ENCODE measurements at regions of chr3 and their contacts with region 1.

Region 1: DNA sequence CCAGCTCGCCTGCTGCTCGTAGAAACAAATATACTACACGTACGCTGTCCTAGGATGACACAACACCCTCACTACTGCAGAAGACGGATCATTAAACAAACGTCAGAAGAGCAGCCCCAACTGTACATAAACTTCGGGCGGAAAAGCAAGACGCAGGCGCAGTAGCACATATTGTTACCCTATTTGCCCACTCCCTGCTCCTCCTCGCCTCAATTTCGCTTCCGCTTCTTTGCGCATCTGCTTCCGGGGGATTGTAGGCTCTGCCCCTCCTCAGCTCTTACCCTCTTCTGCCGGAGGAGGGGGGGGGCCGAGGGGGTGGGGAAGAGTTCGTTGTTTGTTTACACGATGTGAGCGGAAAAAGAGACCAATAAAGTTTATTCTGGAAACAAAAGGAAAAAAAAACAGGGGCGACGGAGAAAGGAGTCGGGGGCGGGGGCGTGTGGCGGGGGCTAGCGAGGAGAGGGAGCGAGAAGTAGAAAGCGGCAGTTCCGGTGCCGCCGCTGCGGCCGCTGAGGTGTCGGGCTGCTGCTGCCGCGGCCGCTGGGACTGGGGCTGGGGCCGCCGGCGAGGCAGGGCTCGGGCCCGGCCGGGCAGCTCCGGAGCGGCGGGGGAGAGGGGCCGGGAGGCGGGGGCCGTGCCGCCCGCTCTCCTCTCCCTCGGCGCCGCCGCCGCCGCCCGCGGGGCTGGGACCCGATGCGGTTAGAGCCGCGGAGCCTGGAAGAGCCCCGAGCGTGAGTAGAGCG is at the start of gene PIK3CA:
- DNase-seq: peak; percentile 95 to 98
- H3K4me3 ChIP-seq: peak within 1 kb of the TSS; percentile 85
- H3K27ac ChIP-seq: peak within 1 kb of the TSS; percentile 68
- H3K4me1 ChIP-seq: peaks cover 20% of the 10 kb centered on the region
- H3K27me3 ChIP-seq: no peaks in the 10 kb centered on the region
- CTCF ChIP-seq: no peak
- total RNA-seq, gene PIK3CA: 33.9 and 39.9 TPM in 2 replicates

Region 2: GRCh38 chr3:179015551-179016020 is 132.5 kb before region 1 on chr3:
- CTCF ChIA-PET with region 1: no interaction called
- POLR2A ChIA-PET with region 1: no interaction called
- intact Hi-C with region 1: loop called (anchors 1 kb)
- DNase-seq: peak; percentile 67 to 76
- H3K4me3 ChIP-seq: no peak overlapping the region
- H3K27ac ChIP-seq: no peak overlapping the region
- H3K4me1 ChIP-seq: no peaks in the 10 kb centered on the region
- H3K27me3 ChIP-seq: no peaks in the 10 kb centered on the region
- CTCF ChIP-seq: peak; percentile 97

Region 3: DNA sequence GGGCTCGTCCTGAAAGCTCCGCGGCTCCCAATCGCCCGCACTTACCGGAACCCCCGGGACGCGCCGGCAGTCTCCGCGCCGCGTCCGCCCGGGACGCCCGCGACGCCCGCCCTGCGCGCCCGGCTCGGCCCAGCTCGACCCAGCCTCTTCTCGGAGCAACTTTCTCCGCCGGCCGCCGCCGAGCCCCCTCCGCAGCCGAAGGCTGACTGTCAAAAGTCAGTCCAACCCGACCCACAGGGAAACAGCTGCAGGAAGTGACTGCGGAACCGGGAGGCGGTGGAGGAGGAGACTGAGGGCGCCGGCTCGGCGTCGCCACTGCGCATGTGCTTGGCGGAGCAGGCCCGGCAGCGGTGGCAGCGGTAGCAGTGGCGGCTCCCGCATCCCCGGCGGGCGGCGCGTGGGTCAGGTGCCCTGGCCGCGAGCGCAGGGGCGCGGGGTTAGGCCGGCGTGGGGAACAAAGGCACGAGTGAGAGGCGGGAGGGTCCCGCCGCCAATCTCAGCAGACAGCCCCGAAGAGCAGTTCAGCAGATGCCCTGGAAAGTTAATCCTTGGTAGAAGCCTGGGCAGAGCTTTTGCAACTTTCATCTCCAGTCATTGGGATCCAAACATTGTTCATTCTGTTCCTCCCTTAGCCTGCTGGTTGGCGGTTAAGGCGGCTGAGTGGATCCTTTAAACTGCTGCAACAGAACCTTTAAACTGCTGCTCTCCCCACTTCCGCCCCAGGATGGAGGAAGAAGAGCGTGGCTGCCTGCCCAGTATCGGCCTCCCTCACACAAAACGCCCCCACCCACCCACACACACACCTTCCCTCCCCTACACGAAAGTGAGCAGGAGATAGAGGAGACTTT is 76.3 kb before region 1 on chr3 and contains the start of gene ZMAT3:
- CTCF ChIA-PET with region 1: no interaction called
- POLR2A ChIA-PET with region 1: no interaction called
- intact Hi-C with region 1: loop called (anchors 2 kb)
- DNase-seq: peak; percentile 63 to 86
- H3K4me3 ChIP-seq: peak within 1 kb of the TSS; percentile 96
- H3K27ac ChIP-seq: no peak within 1 kb of the TSS
- H3K4me1 ChIP-seq: peaks cover 19% of the 10 kb centered on the region
- H3K27me3 ChIP-seq: no peaks in the 10 kb centered on the region
- CTCF ChIP-seq: no peak
- total RNA-seq, gene ZMAT3: 5.9 and 7.2 TPM in 2 replicates

Region 4: DNA sequence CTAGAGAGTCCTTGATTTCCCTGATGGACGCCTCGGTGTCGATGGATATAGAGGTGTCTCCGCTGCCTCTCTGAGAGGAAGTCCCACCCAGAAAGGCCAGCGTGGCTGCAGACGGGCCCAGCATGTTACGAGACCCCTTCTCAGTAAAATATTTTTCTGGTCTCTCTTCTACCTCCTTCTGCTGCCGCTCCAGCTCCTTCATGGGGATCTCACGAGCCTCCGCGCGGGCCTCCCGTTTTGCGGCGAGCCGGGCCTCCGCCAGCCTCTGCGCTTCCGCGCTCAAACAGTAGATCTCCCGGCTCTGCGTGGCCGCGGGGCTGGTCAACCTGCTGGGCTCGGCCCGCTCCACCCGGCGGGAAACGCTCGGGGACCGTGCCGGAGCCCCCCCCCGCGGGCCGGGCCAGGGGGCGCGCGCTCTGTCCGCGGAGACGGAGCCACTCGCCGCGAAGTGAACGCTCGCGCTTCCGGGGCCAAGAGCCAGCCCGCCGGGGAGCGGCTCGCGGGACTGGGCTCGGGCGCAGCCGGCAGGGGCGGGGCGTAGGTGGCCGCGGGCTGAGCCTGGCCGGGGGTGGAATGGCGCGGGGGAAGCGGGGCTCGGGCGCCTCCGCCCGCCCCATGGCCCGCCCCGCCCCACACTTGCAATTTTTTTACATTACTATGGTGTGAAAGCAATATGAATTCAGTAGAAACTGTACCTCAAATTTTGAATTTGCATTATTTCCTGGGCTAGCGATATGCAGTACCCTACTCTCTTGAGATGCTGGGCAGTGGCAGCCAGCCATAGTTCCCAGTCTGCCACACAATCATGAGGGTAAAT is 113.1 kb after region 1 on chr3:
- CTCF ChIA-PET with region 1: no interaction called
- POLR2A ChIA-PET with region 1: interaction called, 3 read pairs
- intact Hi-C with region 1: loop called (anchors 2 kb)
- DNase-seq: peak; percentile 65 to 88
- H3K4me3 ChIP-seq: peak overlapping the region; percentile 70
- H3K27ac ChIP-seq: no peak overlapping the region
- H3K4me1 ChIP-seq: peaks cover 5% of the 10 kb centered on the region
- H3K27me3 ChIP-seq: no peaks in the 10 kb centered on the region
- CTCF ChIP-seq: no peak

Region 5: GRCh38 chr3:179322286-179323196 is 174.5 kb after region 1 on chr3 and contains the start of gene ZNF639:
- CTCF ChIA-PET with region 1: no interaction called
- POLR2A ChIA-PET with region 1: no interaction called
- intact Hi-C with region 1: loop called (anchors 1 kb)
- DNase-seq: peak; percentile 72 to 91
- H3K4me3 ChIP-seq: peak within 1 kb of the TSS; percentile 80
- H3K27ac ChIP-seq: peak within 1 kb of the TSS; percentile 60
- H3K4me1 ChIP-seq: peaks cover 25% of the 10 kb centered on the region
- H3K27me3 ChIP-seq: no peaks in the 10 kb centered on the region
- CTCF ChIP-seq: peak; percentile 80
- total RNA-seq, gene ZNF639: 39.3 and 40.3 TPM in 2 replicates

Region 6: GRCh38 chr3:179921500-179921899 is 773.5 kb after region 1 on chr3:
- CTCF ChIA-PET with region 1: interaction called, 10 read pairs
- POLR2A ChIA-PET with region 1: no interaction called
- intact Hi-C with region 1: no loop called
- DNase-seq: no peak
- H3K4me3 ChIP-seq: no peak overlapping the region
- H3K27ac ChIP-seq: no peak overlapping the region
- H3K4me1 ChIP-seq: no peaks in the 10 kb centered on the region
- H3K27me3 ChIP-seq: no peaks in the 10 kb centered on the region
- CTCF ChIP-seq: no peak